Tibial artery (tissue), 4 donors: ENCODE measurements at regions of chr2 and their contacts with region 1.

Region 1: GRCh38 chr2:128208023-128208665 is 110.5 kb downstream of the HS6ST1 start:
- DNase-seq: no peak
- H3K4me3 ChIP-seq: no peak overlapping the region
- H3K27ac ChIP-seq: no peak overlapping the region
- H3K4me1 ChIP-seq: no peaks in the 10 kb centered on the region
- H3K27me3 ChIP-seq: no peaks in the 10 kb centered on the region
- CTCF ChIP-seq: no peak

Region 2: GRCh38 chr2:128115921-128116623 is 92.1 kb before region 1 on chr2:
- intact Hi-C with region 1: no loop called
- DNase-seq: no peak
- H3K4me3 ChIP-seq: no peak overlapping the region
- H3K27ac ChIP-seq: no peak overlapping the region
- H3K4me1 ChIP-seq: no peaks in the 10 kb centered on the region
- H3K27me3 ChIP-seq: no peaks in the 10 kb centered on the region
- CTCF ChIP-seq: no peak

Region 3: DNA sequence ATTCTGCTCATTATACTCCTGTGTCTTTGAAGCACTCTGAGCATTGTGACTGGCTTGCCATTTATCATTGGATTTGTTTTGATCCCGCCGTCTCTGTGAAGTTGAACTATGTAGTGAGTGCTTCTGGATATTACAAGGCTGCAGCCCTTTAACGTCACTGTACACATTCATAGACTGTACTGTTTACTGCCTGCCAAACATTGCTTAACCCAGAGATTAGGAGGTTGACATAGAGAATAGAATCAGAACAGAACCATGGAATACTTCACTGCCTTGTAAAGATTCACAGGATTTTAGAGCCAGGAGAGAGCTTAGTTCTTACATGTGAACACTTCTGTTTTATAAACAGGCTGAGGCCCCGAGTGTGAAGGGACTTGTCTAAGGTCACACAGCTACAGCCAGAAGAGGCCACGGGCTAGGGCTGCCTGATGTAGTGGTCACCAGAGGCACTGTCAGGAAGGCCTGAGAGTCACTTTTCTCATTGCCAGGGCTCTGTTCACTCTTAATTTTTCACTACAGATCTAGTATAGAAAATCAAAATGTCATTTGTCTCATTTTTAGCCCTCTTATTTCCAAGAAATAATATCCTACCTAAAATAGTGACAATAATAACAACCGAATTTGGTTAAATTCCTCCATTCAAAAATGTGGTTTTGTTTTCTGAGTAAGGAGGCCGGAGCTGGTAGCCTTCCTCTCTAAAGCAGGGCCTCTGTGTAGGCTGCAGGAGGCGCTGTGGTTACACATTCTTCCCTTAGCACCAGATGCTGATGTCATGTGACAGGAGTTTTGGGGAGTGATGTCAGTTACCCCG is 29.3 kb before region 1 on chr2:
- intact Hi-C with region 1: no loop called
- DNase-seq: no peak
- H3K4me3 ChIP-seq: no peak overlapping the region
- H3K27ac ChIP-seq: no peak overlapping the region
- H3K4me1 ChIP-seq: no peaks in the 10 kb centered on the region
- H3K27me3 ChIP-seq: no peaks in the 10 kb centered on the region
- CTCF ChIP-seq: peak; percentile 42 to 49

Region 4: GRCh38 chr2:128285329-128285931 is 77.3 kb after region 1 on chr2:
- intact Hi-C with region 1: loop called (anchors 2 kb)
- DNase-seq: no peak
- H3K4me3 ChIP-seq: no peak overlapping the region
- H3K27ac ChIP-seq: no peak overlapping the region
- H3K4me1 ChIP-seq: peaks cover 0 to 28% (median 6%) of the 10 kb centered on the region in 4 donors
- H3K27me3 ChIP-seq: no peaks in the 10 kb centered on the region
- CTCF ChIP-seq: no peak